ENCODE measurements at regions of chr3 and their contacts with region 1.

Region 1: DNA sequence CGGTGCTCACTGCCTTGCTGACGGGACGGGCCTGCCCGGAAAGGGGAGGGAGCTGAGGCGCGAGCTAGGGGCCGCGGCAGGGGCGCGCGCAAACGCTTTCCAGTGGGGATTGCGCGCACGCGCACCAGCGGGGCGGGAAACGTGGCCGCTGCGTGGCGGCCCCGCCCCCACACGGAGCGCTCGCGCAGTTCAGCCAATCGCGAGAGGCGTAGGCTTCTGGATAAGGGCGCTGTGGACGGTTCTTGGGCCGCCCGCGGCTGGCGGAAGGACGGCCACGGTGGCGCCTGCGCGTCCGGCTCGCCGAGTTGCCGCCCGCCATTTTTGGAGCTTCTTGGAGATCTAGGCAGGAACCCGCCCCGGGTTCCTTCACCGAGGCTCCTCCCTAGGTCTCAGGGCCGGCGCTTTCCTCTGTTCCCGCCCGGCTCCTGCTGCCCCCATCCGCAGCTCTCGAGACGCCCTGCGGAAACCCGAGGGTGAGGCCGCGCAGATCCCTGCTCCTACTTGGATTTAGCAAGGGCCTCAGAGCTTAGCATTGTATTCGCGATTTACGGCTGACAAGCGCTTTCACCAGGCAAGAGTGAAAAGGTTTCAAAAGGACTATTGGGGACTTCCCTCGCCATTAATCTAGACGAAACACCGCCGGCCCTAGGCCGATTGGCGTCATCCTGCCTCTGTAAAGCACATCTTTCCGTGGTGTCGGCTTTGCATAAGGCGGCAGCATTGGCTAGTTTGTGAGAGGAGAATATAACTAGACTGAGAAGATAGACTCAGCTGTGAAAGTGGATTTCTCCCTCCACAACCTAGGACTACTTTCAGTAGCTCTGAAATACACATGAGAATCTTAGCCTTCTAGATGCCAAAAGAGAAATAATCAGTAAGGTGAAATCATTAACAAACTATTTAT is 496 bp upstream of the STAG1 start:
- DNase-seq: peak; percentile 76
- H3K4me3 ChIP-seq: peak overlapping the region; percentile 69
- CTCF ChIP-seq: peak; percentile 24

Region 2: DNA sequence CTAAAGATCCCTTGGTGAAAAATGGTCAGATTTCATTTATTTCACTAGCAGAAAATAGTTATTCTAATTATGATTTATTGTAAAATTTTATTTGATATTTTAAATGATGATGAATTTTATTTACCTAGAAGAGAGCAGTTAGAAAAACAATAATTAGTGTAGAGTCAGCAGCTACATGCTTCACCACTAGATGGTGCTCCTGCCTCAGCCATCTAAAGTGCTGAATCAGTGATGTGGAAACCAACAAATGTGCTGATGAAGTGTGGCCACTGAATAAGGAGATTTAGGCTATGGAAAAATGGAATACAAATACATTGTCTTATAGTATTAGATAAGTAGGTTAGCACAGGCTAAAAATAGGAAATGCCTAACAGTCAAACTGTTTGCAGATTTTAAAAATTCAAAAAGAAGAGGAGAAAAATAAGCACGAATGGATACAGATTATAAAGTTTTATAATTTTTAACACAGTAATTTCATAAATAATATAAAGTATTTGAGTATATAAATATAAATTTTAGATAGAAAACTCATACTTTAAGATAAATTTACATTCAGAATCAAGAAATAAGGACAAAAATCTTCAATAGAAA is 677.4 kb before region 1 on chr3:
- CTCF ChIA-PET with region 1: interaction called, 32 read pairs
- POLR2A ChIA-PET with region 1: interaction called, 7 read pairs
- DNase-seq: no peak
- H3K4me3 ChIP-seq: no peak overlapping the region
- CTCF ChIP-seq: peak; percentile 74

Region 3: GRCh38 chr3:136350132-136350531 is 402.5 kb before region 1 on chr3:
- CTCF ChIA-PET with region 1: interaction called, 18 read pairs
- POLR2A ChIA-PET with region 1: interaction called, 4 read pairs
- DNase-seq: peak; percentile 86
- H3K4me3 ChIP-seq: no peak overlapping the region; the same call in 1 of the 2 replicates
- CTCF ChIP-seq: no peak

Region 4: GRCh38 chr3:136396916-136397315 is 355.8 kb before region 1 on chr3:
- CTCF ChIA-PET with region 1: interaction called, 61 read pairs
- POLR2A ChIA-PET with region 1: interaction called, 9 read pairs
- DNase-seq: no peak
- H3K4me3 ChIP-seq: no peak overlapping the region
- CTCF ChIP-seq: no peak

Region 5: DNA sequence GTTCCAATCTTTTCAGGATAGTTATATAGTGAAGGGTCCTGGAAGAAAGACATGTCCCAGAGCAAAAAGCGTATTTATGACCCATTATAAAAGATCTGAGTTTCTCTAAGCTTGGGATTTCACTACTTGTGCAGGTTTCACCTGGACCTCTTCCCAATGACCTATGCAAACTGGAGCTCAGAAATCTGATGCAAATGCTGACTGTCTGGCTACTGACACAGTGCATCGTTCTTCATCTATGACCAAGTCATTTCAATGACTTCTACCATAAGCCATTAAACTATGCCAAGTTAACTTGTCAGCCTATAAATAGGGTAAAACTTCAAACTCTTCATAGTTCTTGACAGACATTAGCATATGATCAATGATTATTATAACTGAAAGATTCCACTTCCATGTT is 11.6 kb before region 1 on chr3:
- CTCF ChIA-PET with region 1: interaction called, 18 read pairs
- POLR2A ChIA-PET with region 1: interaction called, 5 read pairs
- DNase-seq: no peak
- H3K4me3 ChIP-seq: no peak overlapping the region
- CTCF ChIP-seq: no peak

Region 6: DNA sequence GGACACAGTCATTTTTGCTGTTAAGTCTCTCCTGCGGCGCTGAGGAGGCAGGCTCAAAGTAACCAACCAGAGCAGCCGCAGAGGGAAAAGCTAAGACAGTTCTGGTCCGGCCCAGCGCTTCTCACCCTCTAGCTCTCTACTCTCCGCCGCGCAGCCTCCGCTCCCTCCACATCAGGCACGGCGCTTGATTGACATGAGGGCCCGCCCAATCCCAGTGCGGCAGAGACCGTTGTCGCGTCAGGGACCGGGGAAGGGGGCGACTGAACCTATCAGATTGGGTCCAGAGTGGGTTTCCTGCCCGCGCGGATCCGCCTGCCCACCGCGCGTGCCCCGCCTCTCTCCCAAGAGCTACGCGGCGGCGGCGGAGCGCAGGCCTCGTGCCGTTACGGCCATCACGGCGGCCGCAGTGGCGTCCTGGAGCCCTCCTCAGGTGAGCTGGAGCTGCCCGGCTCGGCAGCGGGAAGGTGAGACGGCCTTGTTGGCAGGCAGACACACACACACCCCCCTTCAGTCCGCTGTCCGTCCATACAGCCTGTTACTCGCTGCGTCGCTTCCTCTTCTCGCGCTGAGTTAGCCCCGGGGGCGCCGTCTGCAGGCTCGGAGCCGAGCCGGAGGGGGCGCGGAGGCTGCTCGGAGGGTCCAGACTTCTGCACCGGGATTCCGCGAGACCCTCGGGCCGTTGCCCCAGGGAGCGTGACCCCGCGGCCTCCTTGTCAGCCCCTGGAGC is 109.4 kb after region 1 on chr3 and contains the start of gene NCK1:
- CTCF ChIA-PET with region 1: interaction called, 20 read pairs
- POLR2A ChIA-PET with region 1: interaction called, 16 read pairs
- DNase-seq: peak; percentile 87
- H3K4me3 ChIP-seq: peak within 1 kb of the TSS; percentile 92
- CTCF ChIP-seq: no peak

Region 7: DNA sequence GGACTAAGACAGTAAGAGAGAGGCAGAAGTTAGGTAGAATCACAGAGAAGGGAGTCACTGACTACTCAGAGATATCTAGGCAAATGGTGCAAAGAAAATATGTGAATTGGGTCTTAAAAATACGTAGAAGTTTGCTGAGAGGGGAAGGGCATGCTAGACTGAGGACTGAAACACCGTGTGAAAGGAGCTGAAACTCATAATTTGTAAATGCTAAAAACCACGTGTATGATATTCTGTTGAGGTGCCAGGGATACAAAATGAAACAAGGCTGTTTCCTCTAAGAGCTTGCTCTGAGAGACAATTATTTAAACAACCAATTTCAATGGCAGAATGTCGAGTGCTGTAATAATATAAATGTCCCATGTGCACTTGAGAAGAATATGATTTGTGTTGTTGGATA is 156.5 kb after region 1 on chr3:
- CTCF ChIA-PET with region 1: no interaction called
- POLR2A ChIA-PET with region 1: no interaction called
- DNase-seq: no peak
- H3K4me3 ChIP-seq: no peak overlapping the region
- CTCF ChIP-seq: no peak

Measured in AG04449 (cell line).